Activated CD8-positive, alpha-beta T cell treated with anti-CD3 and anti-CD28 coated beads for 36 hours (primary cell): ENCODE measurements at regions of chrX and their contacts with region 1.

Region 1: GRCh38 chrX:74015379-74016019 is 288.5 kb upstream of the ZCCHC13 start:
- DNase-seq: peak; percentile 73
- ATAC-seq: peak; percentile 77
- H3K4me3 Mint-ChIP-seq: no peak overlapping the region
- H3K27ac Mint-ChIP-seq: no peak overlapping the region
- H3K4me1 Mint-ChIP-seq: no peaks in the 10 kb centered on the region
- H3K27me3 Mint-ChIP-seq: no peaks in the 10 kb centered on the region
- CTCF ChIP-seq: peak; percentile 51

Region 2: GRCh38 chrX:73855546-73855945 is 160.0 kb before region 1 on chrX:
- CTCF ChIA-PET with region 1: interaction called, 18 read pairs
- POLR2A ChIA-PET with region 1: no interaction called
- intact Hi-C with region 1: loop called (anchors 1 kb)
- DNase-seq: peak; percentile 67
- ATAC-seq: peak; percentile 45
- H3K4me3 Mint-ChIP-seq: no peak overlapping the region
- H3K27ac Mint-ChIP-seq: no peak overlapping the region
- H3K4me1 Mint-ChIP-seq: no peaks in the 10 kb centered on the region
- H3K27me3 Mint-ChIP-seq: no peaks in the 10 kb centered on the region
- CTCF ChIP-seq: no peak